AG04450 (cell line): ENCODE measurements at regions of chr14 and their contacts with region 1.

Region 1: GRCh38 chr14:35229495-35230089 is 62.6 kb upstream of the PSMA6 start:
- DNase-seq: no peak
- H3K4me3 ChIP-seq: no peak overlapping the region
- H3K27ac ChIP-seq: no peak overlapping the region
- H3K27me3 ChIP-seq: no peaks in the 10 kb centered on the region
- CTCF ChIP-seq: 0 out of 2 replicates have a peak, but pooled peaks have one; percentile 2

Region 2: GRCh38 chr14:35121887-35122695 is 107.5 kb before region 1 on chr14 and contains the starts of genes PPP2R3C and PRORP:
- CTCF ChIA-PET with region 1: no interaction called
- POLR2A ChIA-PET with region 1: no interaction called
- DNase-seq: peak; percentile 76
- H3K4me3 ChIP-seq: peak within 1 kb of the TSS; percentile 73
- H3K27ac ChIP-seq: peak within 1 kb of the TSS; percentile 98
- H3K27me3 ChIP-seq: no peaks in the 10 kb centered on the region
- CTCF ChIP-seq: no peak
- polyA plus RNA-seq, gene PPP2R3C: 30.8 and 43.7 TPM in 2 replicates
- polyA plus RNA-seq, gene PRORP: 30.6 and 34.9 TPM in 2 replicates

Region 3: DNA sequence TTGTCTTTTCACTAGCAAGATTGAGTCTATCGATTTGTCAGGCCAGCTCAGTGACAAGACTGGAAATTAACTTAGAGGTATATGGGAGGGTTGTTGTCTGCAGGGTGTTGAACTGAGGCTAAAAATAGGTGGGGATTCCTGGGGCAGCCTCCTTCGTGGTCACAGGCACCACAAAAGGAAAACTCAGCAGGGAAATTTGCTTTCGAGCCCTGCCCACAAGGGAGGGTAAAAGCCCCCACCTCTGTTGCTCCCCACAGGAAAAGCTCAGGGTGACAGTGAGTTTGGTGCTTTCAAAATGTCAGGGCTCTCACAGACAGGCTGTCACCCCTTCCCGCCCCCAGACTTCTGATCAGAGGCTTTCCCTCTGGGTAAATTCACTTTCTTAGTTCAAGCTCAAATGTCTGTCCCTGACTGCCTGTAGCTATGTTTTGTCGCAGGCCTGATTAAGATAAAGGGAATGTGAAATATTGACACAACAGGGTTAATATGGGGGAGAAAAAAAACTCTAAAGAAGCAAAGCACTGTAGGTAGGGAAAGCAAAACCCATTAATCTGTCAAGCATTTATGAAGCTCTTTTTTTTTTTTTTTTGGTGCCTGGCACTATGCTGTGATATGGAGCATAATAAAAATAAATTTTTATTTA is 186.6 kb after region 1 on chr14:
- CTCF ChIA-PET with region 1: interaction called, 15 read pairs
- POLR2A ChIA-PET with region 1: no interaction called
- DNase-seq: no peak
- H3K4me3 ChIP-seq: no peak overlapping the region
- H3K27ac ChIP-seq: no peak overlapping the region
- H3K27me3 ChIP-seq: no peaks in the 10 kb centered on the region
- CTCF ChIP-seq: no peak